Activated CD4-positive, alpha-beta memory T cell treated with anti-CD3 and anti-CD28 coated beads for 36 hours (primary cell): ENCODE measurements at regions of chr15 and their contacts with region 1.

Region 1: GRCh38 chr15:75367913-75368688 is at the start of gene MAN2C1:
- DNase-seq: peak; percentile 96
- H3K4me3 Mint-ChIP-seq: peak within 1 kb of the TSS; percentile 90
- H3K27ac Mint-ChIP-seq: peak within 1 kb of the TSS; percentile 93
- H3K4me1 Mint-ChIP-seq: peaks cover 23% of the 10 kb centered on the region
- H3K27me3 Mint-ChIP-seq: no peaks in the 10 kb centered on the region
- total RNA-seq, gene MAN2C1: 177 to 192 TPM

Region 2: DNA sequence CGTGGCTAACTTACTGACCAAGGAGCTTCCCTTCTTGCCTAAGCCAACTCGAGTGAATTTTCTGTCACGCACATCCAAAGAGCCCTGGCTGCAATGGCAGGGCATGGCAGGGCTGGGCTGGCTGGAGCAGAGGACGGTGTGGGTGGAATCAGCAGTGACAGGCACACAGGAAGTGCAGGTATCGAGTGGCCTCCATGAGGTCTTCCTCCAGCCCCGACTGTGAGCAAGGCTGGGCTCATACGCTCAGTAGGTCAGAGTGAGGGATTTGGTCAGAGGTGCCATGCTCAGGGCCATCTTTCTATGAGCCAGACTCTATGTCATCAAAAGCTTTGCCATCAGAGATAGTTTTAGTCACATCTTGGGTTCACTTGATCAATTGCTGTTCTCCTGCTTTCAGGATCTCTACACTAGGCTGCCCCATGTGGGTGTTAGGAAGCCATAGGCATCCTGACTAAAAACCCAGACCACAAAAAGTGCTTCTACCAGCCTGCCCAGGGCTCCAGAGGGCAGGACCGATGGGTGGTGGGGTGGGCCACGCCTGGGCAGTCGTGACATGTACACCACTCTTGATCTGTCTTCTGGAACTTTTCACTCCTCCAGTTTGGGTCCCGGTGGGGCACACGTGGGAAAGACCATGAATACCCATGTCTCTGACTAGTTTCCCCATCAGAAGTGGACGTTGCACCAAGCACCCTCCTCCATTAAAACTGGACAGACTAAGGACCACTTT is 54.8 kb before region 1 on chr15:
- CTCF ChIA-PET with region 1: no interaction called
- POLR2A ChIA-PET with region 1: no interaction called
- intact Hi-C with region 1: no loop called
- DNase-seq: no peak
- H3K4me3 Mint-ChIP-seq: no peak overlapping the region
- H3K27ac Mint-ChIP-seq: no peak overlapping the region
- H3K4me1 Mint-ChIP-seq: no peaks in the 10 kb centered on the region
- H3K27me3 Mint-ChIP-seq: peaks cover 8% of the 10 kb centered on the region

Region 3: DNA sequence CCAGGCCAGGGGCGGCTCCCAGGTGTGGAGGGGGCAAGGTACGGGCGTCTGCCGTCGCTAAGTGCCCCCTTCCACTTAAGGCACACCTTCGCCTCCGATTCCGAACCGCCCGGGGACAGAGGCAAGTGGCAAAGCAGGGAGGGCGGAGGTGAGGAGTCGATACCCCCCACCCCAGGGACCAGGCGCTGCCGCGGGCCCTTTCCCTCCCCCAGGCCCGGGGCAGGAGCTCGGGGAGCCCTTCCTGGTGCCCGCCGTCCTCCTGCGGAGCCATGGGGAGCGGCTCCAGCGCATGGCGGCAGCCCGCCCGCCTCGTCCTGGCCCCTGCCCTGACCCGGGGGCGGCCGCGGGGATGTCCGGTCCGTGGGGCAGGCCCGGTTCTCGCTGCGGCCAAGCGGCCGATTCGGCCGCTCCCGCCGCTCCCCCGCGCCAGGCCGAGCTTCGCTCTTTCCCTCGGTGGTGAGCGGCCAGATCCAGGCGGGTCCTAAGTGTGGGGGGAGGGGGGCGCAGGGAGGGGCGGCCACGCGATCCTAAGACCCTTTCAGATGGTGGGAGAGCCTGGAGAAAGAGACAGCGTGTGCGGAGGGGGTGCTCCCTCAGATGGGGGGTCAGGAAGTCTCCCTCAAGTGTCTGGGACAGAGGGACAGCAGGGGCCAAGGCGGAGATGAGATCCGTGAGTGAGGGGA is 20.1 kb before region 1 on chr15:
- CTCF ChIA-PET with region 1: interaction called, 10 read pairs
- POLR2A ChIA-PET with region 1: interaction called, 9 read pairs
- intact Hi-C with region 1: no loop called
- DNase-seq: peak; percentile 26
- H3K4me3 Mint-ChIP-seq: peak overlapping the region; percentile 79
- H3K27ac Mint-ChIP-seq: no peak overlapping the region
- H3K4me1 Mint-ChIP-seq: peaks cover 28% of the 10 kb centered on the region
- H3K27me3 Mint-ChIP-seq: no peaks in the 10 kb centered on the region

Region 4: DNA sequence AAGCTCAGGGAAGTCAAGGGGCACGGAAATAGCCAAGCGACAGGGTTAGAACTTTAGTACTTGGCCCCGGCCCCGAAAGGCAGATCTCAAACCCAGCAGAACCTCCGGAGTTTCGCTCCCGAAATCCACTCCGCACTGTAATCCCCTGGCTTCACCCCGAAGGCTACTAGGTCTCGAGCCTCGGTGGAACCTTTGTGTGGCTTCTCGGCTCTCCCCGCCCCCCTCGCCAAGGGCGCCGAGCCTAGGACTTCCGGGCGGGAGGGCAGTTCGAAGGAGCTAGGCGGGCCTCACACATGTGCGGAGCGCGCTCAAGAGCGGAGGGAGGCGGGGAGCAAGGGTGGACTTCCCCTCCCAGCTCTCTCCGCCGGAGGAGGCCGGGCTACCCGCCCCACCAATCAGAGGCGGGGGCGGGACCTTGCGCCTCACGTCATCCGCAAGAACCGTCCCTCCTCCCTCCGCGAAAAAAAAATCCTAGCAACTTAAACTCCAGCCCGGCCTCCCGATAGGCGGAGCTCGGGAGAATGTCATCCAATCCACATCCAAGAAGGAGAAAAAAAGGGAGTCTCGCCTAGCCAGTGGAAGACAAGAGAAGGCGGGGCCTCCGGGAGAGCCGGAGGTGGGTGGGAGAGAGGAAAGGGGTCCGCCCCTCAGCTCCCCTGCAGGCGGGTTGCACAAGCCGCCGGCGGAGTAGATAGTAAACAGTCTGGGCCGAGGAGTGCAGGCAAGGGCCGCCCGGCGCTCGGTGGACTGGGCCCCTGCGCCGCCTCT is 85.8 kb after region 1 on chr15:
- CTCF ChIA-PET with region 1: interaction called, 87 read pairs
- POLR2A ChIA-PET with region 1: interaction called, 86 read pairs
- intact Hi-C with region 1: loop called (anchors 1 kb)
- DNase-seq: peak; percentile 98
- H3K4me3 Mint-ChIP-seq: peak overlapping the region; percentile 97
- H3K27ac Mint-ChIP-seq: peak overlapping the region; percentile 99
- H3K4me1 Mint-ChIP-seq: peaks cover 24% of the 10 kb centered on the region
- H3K27me3 Mint-ChIP-seq: no peaks in the 10 kb centered on the region

Region 5: DNA sequence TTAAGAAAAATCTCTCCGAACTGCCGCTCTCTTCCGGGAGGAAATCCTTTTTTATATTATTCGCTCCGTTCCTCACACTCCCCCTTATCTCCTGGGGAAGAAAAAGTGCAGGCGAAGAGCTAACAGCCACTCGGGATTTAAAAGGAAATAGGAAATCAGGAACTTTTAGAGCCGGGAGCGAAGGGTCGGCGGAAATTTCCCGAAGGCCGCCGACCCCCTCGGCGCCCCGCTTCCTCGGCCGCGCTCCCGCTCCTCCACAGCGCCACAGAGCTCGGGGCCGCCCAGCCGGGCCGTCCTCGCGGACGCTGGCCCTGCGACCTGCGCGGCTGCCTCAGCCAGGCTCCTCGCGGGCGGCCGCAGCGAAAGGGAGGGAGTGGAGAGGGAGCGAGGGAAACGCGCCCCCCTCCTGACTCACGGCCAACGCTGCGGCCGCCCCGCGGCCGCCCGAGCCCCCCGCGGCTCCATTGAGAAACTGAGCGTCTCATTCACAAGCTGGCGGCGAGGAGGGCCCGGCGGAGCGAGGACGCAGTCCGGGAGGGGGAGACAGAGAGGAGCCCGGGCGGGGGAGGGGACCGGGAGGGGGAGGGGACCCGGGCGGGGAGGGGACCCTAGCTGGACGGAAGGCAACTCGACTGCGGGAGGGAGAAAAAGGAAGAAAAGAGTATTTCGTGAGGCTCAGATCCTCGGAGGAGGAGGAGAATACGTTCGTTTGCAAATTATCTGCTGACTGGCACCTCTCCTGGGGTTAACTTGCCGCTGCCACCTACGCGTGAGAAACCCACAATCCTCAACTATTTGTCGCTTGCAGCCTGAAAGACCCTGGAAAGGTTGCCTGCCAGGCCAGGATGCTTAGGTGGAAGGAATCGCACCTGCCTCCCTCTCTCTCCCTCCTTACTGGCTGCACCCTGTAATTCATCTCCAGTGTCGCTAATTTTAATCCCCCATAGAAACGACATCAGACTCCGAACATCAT is 211.1 kb after region 1 on chr15 and contains the start of gene PTPN9:
- CTCF ChIA-PET with region 1: interaction called, 19 read pairs
- POLR2A ChIA-PET with region 1: interaction called, 7 read pairs
- intact Hi-C with region 1: no loop called
- DNase-seq: peak; percentile 84
- H3K4me3 Mint-ChIP-seq: peak within 1 kb of the TSS; percentile 91
- H3K27ac Mint-ChIP-seq: peak within 1 kb of the TSS; percentile 93
- H3K4me1 Mint-ChIP-seq: peaks cover 16% of the 10 kb centered on the region
- H3K27me3 Mint-ChIP-seq: no peaks in the 10 kb centered on the region
- total RNA-seq, gene PTPN9: 19.2 to 20.9 TPM

Region 6: GRCh38 chr15:75639709-75640482 is 271.8 kb after region 1 on chr15 and contains the start of gene IMP3:
- CTCF ChIA-PET with region 1: interaction called, 69 read pairs
- POLR2A ChIA-PET with region 1: interaction called, 45 read pairs
- intact Hi-C with region 1: loop called (anchors 1 kb)
- DNase-seq: peak; percentile 98
- H3K4me3 Mint-ChIP-seq: peak within 1 kb of the TSS; percentile 86
- H3K27ac Mint-ChIP-seq: peak within 1 kb of the TSS; percentile 86
- H3K4me1 Mint-ChIP-seq: peaks cover 27% of the 10 kb centered on the region
- H3K27me3 Mint-ChIP-seq: no peaks in the 10 kb centered on the region
- total RNA-seq, gene IMP3: 71.7 to 72.4 TPM

Region 7: DNA sequence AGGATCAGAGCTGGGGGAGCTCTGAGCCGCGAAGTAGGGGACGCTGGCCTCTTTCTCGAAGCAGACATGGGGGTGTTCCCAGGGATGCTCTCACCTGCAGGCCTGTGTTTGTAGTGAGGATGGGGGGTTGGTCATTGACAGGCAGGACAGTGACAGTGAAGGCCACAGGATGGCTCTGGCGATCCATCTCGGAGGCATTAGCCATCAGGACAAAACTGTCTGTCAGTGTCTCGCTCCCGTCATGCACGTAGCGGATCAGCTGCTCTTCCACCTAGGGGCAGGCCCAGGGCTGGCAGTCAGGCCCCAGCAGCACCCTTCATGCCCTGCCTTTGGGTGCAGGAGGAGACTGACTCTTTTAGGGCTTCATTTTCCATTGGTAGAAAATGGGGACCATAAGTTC is 316.5 kb after region 1 on chr15:
- CTCF ChIA-PET with region 1: interaction called, 45 read pairs
- POLR2A ChIA-PET with region 1: no interaction called
- intact Hi-C with region 1: loop called (anchors 2 kb)
- DNase-seq: no peak
- H3K4me3 Mint-ChIP-seq: no peak overlapping the region
- H3K27ac Mint-ChIP-seq: no peak overlapping the region
- H3K4me1 Mint-ChIP-seq: no peaks in the 10 kb centered on the region
- H3K27me3 Mint-ChIP-seq: peaks cover 2% of the 10 kb centered on the region

Region 8: GRCh38 chr15:75697523-75697922 is 329.4 kb after region 1 on chr15:
- CTCF ChIA-PET with region 1: no interaction called
- POLR2A ChIA-PET with region 1: no interaction called
- intact Hi-C with region 1: no loop called
- DNase-seq: no peak
- H3K4me3 Mint-ChIP-seq: no peak overlapping the region
- H3K27ac Mint-ChIP-seq: no peak overlapping the region
- H3K4me1 Mint-ChIP-seq: peaks cover 9% of the 10 kb centered on the region
- H3K27me3 Mint-ChIP-seq: peaks cover 2% of the 10 kb centered on the region